T-cell (primary cell): ENCODE measurements at regions of chr3 and their contacts with region 1.

Region 1: GRCh38 chr3:112642912-112643506 is 2.1 kb upstream of the CCDC80 start:
- DNase-seq: peak; percentile 57 to 89 (median 74)
- ATAC-seq: peak; percentile 92 to 100 (median 97)
- H3K4me3 ChIP-seq: peak overlapping the region in 1 of 2 donors; percentile 28
- H3K4me3 Mint-ChIP-seq: peak overlapping the region; percentile 44 to 72 (median 66)
- H3K27ac ChIP-seq: no peak overlapping the region
- H3K27ac Mint-ChIP-seq: peak overlapping the region in 1 of 2 donors; percentile 44
- H3K4me1 ChIP-seq: peaks cover 2 to 16% of the 10 kb centered on the region in 2 experiments
- H3K4me1 Mint-ChIP-seq: peaks cover 13 to 19% (median 14%) of the 10 kb centered on the region in 3 donors
- H3K27me3 ChIP-seq: peaks cover 0 to 16% of the 10 kb centered on the region in 2 experiments
- H3K27me3 Mint-ChIP-seq: peaks cover 0 to 5% of the 10 kb centered on the region in 2 donors

Region 2: GRCh38 chr3:112653209-112653871 is 10.3 kb after region 1 on chr3:
- CTCF ChIA-PET with region 1: interaction called, 4 to 20 read pairs
- POLR2A ChIA-PET with region 1: no interaction called
- DNase-seq: no peak
- ATAC-seq: no peak
- H3K4me3 ChIP-seq: no peak overlapping the region
- H3K4me3 Mint-ChIP-seq: no peak overlapping the region
- H3K27ac ChIP-seq: no peak overlapping the region
- H3K27ac Mint-ChIP-seq: no peak overlapping the region
- H3K4me1 ChIP-seq: no peaks in the 10 kb centered on the region
- H3K4me1 Mint-ChIP-seq: peaks cover 0 to 8% (median 0%) of the 10 kb centered on the region in 3 donors
- H3K27me3 ChIP-seq: no peaks in the 10 kb centered on the region
- H3K27me3 Mint-ChIP-seq: no peaks in the 10 kb centered on the region

Region 3: DNA sequence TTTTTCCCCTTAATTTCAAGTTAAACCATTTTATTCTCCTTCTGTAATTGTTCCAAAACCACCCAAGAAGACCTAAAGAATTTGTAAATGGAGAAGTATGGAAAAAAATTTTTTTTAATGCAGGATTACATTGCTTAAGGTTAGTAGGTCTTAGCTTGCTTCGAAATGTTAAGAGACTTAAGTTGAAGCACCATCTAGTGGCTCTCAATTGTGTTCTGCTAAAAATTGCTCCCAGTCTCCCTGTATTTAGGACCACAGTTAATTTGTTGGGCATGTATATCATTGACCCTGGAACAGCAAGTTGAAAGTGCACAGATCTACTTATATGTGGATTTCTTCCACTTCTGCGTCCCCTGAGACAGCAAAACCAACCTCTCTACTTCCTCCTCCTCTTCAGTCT is 171.3 kb after region 1 on chr3:
- CTCF ChIA-PET with region 1: interaction called in 1 of 2 experiments, 22 read pairs
- POLR2A ChIA-PET with region 1: no interaction called
- DNase-seq: peak in 1 of 35 experiments; percentile 34
- ATAC-seq: no peak
- H3K4me3 ChIP-seq: no peak overlapping the region
- H3K4me3 Mint-ChIP-seq: no peak overlapping the region
- H3K27ac ChIP-seq: no peak overlapping the region
- H3K27ac Mint-ChIP-seq: peak overlapping the region in 1 of 2 donors; percentile 29
- H3K4me1 ChIP-seq: peaks cover 6 to 8% of the 10 kb centered on the region in 2 experiments
- H3K4me1 Mint-ChIP-seq: peaks cover 14 to 34% (median 32%) of the 10 kb centered on the region in 3 donors
- H3K27me3 ChIP-seq: no peaks in the 10 kb centered on the region
- H3K27me3 Mint-ChIP-seq: peaks cover 0 to 4% of the 10 kb centered on the region in 2 donors

Region 4: GRCh38 chr3:112979240-112979832 is 336.3 kb after region 1 on chr3:
- CTCF ChIA-PET with region 1: interaction called, 7 to 49 read pairs
- POLR2A ChIA-PET with region 1: interaction called in 1 of 2 experiments, 3 read pairs
- DNase-seq: peak in 6 of 35 experiments; percentile 19 to 76 (median 30)
- ATAC-seq: no peak
- H3K4me3 ChIP-seq: no peak overlapping the region
- H3K4me3 Mint-ChIP-seq: no peak overlapping the region
- H3K27ac ChIP-seq: no peak overlapping the region
- H3K27ac Mint-ChIP-seq: peak overlapping the region in 1 of 2 donors; percentile 8
- H3K4me1 ChIP-seq: peaks cover 31 to 53% of the 10 kb centered on the region in 2 experiments
- H3K4me1 Mint-ChIP-seq: peaks cover 66 to 75% (median 69%) of the 10 kb centered on the region in 3 donors
- H3K27me3 ChIP-seq: no peaks in the 10 kb centered on the region
- H3K27me3 Mint-ChIP-seq: no peaks in the 10 kb centered on the region

Region 5: GRCh38 chr3:113287803-113288648 is 645.0 kb after region 1 on chr3:
- CTCF ChIA-PET with region 1: interaction called, 17 to 29 read pairs
- POLR2A ChIA-PET with region 1: interaction called in 1 of 2 experiments, 3 read pairs
- DNase-seq: peak in 25 of 35 experiments; percentile 5 to 72 (median 32)
- ATAC-seq: peak in 2 of 4 experiments; percentile 38 to 40
- H3K4me3 ChIP-seq: no peak overlapping the region
- H3K4me3 Mint-ChIP-seq: no peak overlapping the region
- H3K27ac ChIP-seq: no peak overlapping the region
- H3K27ac Mint-ChIP-seq: no peak overlapping the region
- H3K4me1 ChIP-seq: no peaks in the 10 kb centered on the region
- H3K4me1 Mint-ChIP-seq: no peaks in the 10 kb centered on the region
- H3K27me3 ChIP-seq: no peaks in the 10 kb centered on the region
- H3K27me3 Mint-ChIP-seq: no peaks in the 10 kb centered on the region